ENCODE measurements at regions of chr10 and their contacts with region 1.

Region 1: GRCh38 chr10:132588301-132589013 is 50.9 kb downstream of the INPP5A start:
- DNase-seq: peak; percentile 68 to 76
- ATAC-seq: no peak
- H3K4me3 ChIP-seq: no peak overlapping the region
- H3K27ac ChIP-seq: peak overlapping the region; percentile 58 to 81
- H3K4me1 ChIP-seq: peaks cover 4 to 8% of the 10 kb centered on the region in 2 donors
- H3K27me3 ChIP-seq: no peaks in the 10 kb centered on the region

Region 2: DNA sequence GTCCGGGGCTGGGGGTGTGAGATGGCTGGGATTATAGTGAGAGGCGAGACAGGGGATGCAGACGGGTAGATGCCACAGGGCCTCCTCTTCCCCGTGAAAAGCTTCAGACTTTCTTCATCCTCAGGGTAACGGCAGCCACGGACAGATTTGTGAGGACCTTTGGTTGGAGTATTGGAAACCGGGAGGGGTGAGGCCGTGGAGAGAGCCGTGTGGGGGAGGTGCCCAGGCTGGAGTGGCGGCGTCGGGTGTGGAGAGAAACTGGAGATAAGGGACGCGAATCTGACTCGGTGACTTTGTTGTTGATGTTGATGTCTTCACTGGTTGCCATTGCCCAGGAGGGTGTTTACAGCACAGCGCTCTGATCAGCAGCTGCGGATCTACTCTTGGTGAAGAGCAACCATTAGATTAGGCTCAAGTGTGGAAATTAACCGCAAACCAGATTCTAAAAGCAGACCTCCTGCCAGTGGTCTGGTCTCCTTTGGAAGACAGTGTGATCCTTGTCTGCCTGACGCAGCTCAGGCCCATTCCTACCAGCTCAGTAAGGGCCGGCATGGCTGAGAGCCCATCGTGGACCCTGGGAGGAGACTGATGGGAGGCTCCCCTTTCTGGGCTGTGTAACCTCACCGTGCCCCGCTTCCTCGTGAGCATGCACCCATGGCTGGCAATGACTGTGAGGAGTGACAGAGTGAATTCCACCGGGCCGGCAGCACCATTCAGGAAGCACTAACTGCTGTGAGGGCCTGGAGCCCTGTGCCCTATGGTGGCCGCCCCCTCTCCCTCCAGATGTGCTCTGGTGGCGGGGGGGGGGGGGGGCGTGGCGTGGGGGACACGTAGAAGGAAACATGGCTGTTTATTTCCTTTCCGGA is 39.4 kb after region 1 on chr10:
- intact Hi-C with region 1: loop called (anchors 2 to 5 kb)
- DNase-seq: peak; percentile 80 to 85
- ATAC-seq: peak; percentile 33
- H3K4me3 ChIP-seq: no peak overlapping the region
- H3K27ac ChIP-seq: peak overlapping the region; percentile 59 to 79
- H3K4me1 ChIP-seq: peaks cover 0 to 3% of the 10 kb centered on the region in 2 donors
- H3K27me3 ChIP-seq: no peaks in the 10 kb centered on the region

Region 3: GRCh38 chr10:132946806-132947546 is 358.5 kb after region 1 on chr10:
- intact Hi-C with region 1: no loop called
- DNase-seq: no peak
- ATAC-seq: no peak
- H3K4me3 ChIP-seq: no peak overlapping the region
- H3K27ac ChIP-seq: no peak overlapping the region
- H3K4me1 ChIP-seq: no peaks in the 10 kb centered on the region
- H3K27me3 ChIP-seq: no peaks in the 10 kb centered on the region